PC-3 (cell line): ENCODE measurements at regions of chr7 and their contacts with region 1.

Region 1: GRCh38 chr7:116776610-116777289 is 85.6 kb upstream of the CAPZA2 start:
- DNase-seq: peak; percentile 91
- ATAC-seq: peak; percentile 55
- H3K4me3 ChIP-seq: peak overlapping the region; percentile 53
- H3K27ac ChIP-seq: peak overlapping the region; percentile 99
- H3K4me1 ChIP-seq: peaks cover 85% of the 10 kb centered on the region
- H3K27me3 ChIP-seq: no peaks in the 10 kb centered on the region
- CTCF ChIP-seq: no peak

Region 2: GRCh38 chr7:116211006-116211912 is 565.5 kb before region 1 on chr7:
- CTCF ChIA-PET with region 1: no interaction called
- POLR2A ChIA-PET with region 1: no interaction called
- intact Hi-C with region 1: loop called (anchors 5 kb)
- DNase-seq: peak; percentile 95
- ATAC-seq: peak; percentile 75
- H3K4me3 ChIP-seq: peak overlapping the region; percentile 93
- H3K27ac ChIP-seq: peak overlapping the region; percentile 97
- H3K4me1 ChIP-seq: peaks cover 40% of the 10 kb centered on the region
- H3K27me3 ChIP-seq: no peaks in the 10 kb centered on the region
- CTCF ChIP-seq: no peak

Region 3: DNA sequence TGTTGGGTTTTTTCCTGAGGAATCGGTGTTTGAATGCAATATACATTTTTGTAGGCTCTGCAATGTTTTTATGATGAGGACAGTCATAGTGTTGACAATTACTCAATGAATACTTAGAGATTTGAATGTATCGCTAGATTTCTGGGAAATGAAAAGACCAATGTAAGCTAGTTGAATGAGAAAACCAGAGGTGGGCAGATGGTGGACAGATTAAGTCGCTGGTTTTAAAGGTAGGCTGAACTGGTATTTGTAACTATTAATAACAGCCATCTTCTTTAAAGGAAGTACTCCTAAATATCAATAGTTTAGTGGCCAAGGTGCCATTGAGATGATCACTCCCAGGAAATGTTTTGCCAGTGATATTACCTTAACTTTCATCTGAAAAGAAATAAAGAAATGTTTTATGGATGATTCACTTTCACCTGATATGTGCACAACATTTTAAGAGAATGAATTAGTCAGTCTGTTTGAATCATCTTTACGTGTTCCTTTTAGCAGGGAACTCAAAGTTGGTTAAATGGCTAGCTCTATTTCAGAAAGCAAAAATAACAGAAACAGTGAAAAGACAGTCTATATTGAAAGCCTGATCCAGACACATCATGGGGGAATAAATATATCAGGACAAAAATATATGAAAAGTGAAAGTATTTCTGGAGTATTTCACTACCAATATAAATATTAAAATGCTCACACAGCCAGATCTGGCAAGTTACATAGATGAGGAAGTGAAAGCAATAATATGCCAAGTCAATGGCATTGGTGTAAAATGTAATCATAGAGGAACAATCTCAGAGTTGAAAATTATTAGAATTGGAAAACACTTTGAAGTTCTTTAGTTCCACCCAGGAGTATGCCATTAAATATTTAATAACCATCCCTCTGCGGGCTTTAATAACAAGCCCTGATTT is 84.1 kb before region 1 on chr7:
- CTCF ChIA-PET with region 1: interaction called, 5 read pairs
- POLR2A ChIA-PET with region 1: interaction called, 4 read pairs
- intact Hi-C with region 1: loop called (anchors 1 kb)
- DNase-seq: peak; percentile 85
- ATAC-seq: peak; percentile 52
- H3K4me3 ChIP-seq: peak overlapping the region; percentile 34
- H3K27ac ChIP-seq: peak overlapping the region; percentile 89
- H3K4me1 ChIP-seq: peaks cover 64% of the 10 kb centered on the region
- H3K27me3 ChIP-seq: no peaks in the 10 kb centered on the region
- CTCF ChIP-seq: no peak

Region 4: DNA sequence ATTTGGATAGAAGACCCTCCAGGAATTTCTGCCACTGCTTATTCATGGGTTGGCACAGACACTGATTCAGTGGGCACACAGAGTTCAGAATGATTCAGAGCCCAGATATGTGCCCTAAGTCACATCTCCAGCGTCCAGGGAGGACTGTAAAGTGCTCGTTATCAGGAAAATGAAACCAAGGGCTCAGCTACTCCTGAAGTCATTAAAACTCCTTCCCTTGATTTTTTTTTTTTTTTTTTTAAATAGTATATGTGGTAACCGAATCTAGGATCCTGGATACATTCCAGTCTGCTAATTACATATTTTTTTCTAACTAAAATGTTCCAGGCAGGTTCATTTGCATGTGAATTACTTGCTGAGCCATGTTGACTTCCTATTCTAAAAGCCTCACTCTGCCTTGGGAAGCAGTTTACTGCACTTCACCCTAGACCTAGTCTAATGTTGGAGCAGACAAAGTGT is 70.1 kb before region 1 on chr7:
- CTCF ChIA-PET with region 1: no interaction called
- POLR2A ChIA-PET with region 1: no interaction called
- intact Hi-C with region 1: loop called (anchors 2 kb)
- DNase-seq: peak; percentile 85
- ATAC-seq: peak; percentile 59
- H3K4me3 ChIP-seq: peak overlapping the region; percentile 53
- H3K27ac ChIP-seq: peak overlapping the region; percentile 62
- H3K4me1 ChIP-seq: peaks cover 98% of the 10 kb centered on the region
- H3K27me3 ChIP-seq: no peaks in the 10 kb centered on the region
- CTCF ChIP-seq: no peak

Region 5: GRCh38 chr7:116726713-116727431 is 49.9 kb before region 1 on chr7:
- CTCF ChIA-PET with region 1: no interaction called
- POLR2A ChIA-PET with region 1: interaction called, 5 read pairs
- intact Hi-C with region 1: loop called (anchors 5 kb)
- DNase-seq: no peak
- ATAC-seq: no peak
- H3K4me3 ChIP-seq: no peak overlapping the region
- H3K27ac ChIP-seq: peak overlapping the region; percentile 28; the same call in 1 of the 2 replicates
- H3K4me1 ChIP-seq: peaks cover 47% of the 10 kb centered on the region
- H3K27me3 ChIP-seq: no peaks in the 10 kb centered on the region
- CTCF ChIP-seq: no peak

Region 6: DNA sequence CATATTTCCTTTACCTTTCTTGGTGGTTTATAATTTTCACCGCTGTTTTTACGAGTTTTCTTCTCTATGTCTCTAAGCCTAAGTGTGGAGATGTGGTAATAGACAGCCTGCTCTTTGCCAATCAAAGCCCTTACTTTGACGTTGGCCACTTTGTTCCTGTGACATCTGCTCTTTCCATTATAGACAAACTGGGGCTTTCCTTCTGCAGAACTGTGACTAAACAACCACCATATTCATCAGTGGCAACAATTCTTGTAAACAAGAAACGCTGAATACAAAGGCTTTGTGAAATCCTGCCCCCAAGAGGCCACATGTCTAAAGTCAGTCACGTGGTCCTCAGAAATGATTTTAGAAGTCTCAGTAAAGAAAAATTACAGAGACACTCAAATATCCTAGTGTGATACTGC is 26.0 kb after region 1 on chr7:
- CTCF ChIA-PET with region 1: no interaction called
- POLR2A ChIA-PET with region 1: interaction called, 5 read pairs
- intact Hi-C with region 1: loop called (anchors 1 kb)
- DNase-seq: peak; percentile 74
- ATAC-seq: peak; percentile 39
- H3K4me3 ChIP-seq: no peak overlapping the region
- H3K27ac ChIP-seq: peak overlapping the region; percentile 12; the same call in 1 of the 2 replicates
- H3K4me1 ChIP-seq: peaks cover 47% of the 10 kb centered on the region
- H3K27me3 ChIP-seq: no peaks in the 10 kb centered on the region
- CTCF ChIP-seq: peak; percentile 71

Region 7: GRCh38 chr7:117445206-117445605 is 668.5 kb after region 1 on chr7:
- CTCF ChIA-PET with region 1: no interaction called
- POLR2A ChIA-PET with region 1: no interaction called
- intact Hi-C with region 1: no loop called
- DNase-seq: no peak
- ATAC-seq: no peak
- H3K4me3 ChIP-seq: no peak overlapping the region
- H3K27ac ChIP-seq: no peak overlapping the region
- H3K4me1 ChIP-seq: no peaks in the 10 kb centered on the region
- H3K27me3 ChIP-seq: peaks cover 16% of the 10 kb centered on the region; the same call in 1 of the 2 replicates
- CTCF ChIP-seq: no peak